Activated naive CD4-positive, alpha-beta T cell treated with anti-CD3 and anti-CD28 coated beads for 36 hours (primary cell): ENCODE measurements at regions of chr13 and their contacts with region 1.

Region 1: DNA sequence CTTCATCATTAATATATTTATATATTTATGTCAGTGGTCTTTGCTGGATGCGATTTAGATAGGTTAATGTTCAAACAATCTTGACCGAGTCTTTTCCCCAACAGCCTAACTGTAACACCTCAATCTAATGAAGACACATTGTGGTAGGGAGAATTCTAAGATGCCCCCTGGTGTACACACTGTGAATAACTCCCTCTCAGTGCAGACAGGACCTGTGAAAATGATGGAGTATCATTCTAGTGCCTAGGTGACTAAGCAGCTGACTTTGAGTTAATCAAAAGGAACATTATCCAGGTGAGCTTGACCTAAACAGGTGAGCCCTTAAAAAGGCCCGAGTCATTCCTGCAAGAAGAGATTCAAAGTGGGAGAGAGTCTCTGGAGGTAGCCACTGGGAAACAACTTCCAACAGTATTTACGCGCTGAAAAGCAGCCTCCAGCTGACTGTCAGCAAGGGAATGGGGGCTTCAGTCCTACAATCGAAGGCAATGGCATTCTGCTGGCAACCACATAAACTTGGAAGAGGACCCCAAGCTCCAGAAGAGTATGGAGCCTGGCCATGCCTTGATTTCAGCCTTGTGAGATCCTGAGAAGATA is 28.0 kb upstream of the KBTBD7 start:
- DNase-seq: peak; percentile 78
- H3K4me3 Mint-ChIP-seq: no peak overlapping the region
- H3K27ac Mint-ChIP-seq: no peak overlapping the region
- H3K4me1 Mint-ChIP-seq: no peaks in the 10 kb centered on the region
- H3K27me3 Mint-ChIP-seq: no peaks in the 10 kb centered on the region

Region 2: GRCh38 chr13:41075034-41075433 is 147.3 kb before region 1 on chr13:
- CTCF ChIA-PET with region 1: interaction called, 32 read pairs
- intact Hi-C with region 1: loop called (anchors 1 kb)
- DNase-seq: peak; percentile 26
- H3K4me3 Mint-ChIP-seq: no peak overlapping the region
- H3K27ac Mint-ChIP-seq: no peak overlapping the region
- H3K4me1 Mint-ChIP-seq: no peaks in the 10 kb centered on the region
- H3K27me3 Mint-ChIP-seq: no peaks in the 10 kb centered on the region